Ovary (tissue), 10 donors: ENCODE measurements at regions of chr11 and their contacts with region 1.

Region 1: DNA sequence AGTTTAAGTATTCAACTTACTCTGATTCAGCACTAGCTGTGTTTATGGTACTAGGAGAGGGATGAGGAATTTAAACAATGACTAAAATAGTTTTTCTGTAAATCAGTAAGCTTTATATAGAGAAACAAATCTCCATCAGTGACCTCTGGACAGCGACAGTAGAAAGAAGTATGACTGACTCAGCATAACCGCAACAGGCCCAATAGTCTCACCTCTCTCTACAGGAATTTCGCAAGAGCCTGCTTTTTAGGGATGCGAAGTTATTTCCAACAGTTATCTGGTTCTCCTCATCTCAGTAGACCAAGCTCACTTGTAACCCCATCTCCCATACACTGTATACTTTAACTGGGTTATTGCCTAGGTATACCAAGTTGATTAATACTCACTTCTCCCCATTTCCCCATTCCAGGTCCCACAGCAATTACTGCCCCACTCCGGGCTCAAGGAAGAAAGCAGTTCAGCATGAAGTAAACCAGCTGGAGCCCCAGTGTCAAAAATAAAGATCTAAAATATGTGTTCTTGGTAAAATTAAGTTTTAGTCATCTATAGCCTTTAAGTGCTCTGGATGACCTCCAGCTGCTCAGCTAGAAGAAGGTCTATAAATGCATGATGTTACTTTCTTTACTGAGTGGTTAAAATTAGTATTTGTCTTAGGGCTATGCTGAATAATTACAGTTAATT is 770.7 kb upstream of the CCDC90B start:
- DNase-seq: no peak
- H3K4me3 ChIP-seq: no peak overlapping the region
- H3K27ac ChIP-seq: no peak overlapping the region
- H3K4me1 ChIP-seq: no peaks in the 10 kb centered on the region
- H3K27me3 ChIP-seq: no peaks in the 10 kb centered on the region
- CTCF ChIP-seq: no peak
- EP300 ChIP-seq: no peak
- POLR2A ChIP-seq: no peak

Region 2: DNA sequence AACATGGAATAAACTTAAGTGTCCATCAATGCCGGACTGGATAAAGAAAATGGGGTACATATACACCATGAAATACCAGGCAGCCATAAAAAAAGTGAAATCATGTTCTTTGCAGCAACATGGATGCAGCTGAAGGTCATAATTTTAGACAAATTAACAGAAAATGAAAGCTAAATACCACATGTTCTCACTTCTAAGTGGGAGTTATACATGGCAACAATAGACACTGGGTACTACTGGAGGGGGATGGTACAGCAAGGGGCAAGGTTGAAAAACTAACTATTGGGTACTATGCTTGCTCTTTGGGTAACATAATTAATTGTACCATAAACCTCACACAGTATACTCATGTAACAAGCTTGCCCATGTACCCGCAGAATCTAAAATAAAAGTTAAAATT is 718.7 kb after region 1 on chr11:
- intact Hi-C with region 1: loop called in 1 of 4 experiments (anchors 10 kb)
- DNase-seq: no peak
- H3K4me3 ChIP-seq: no peak overlapping the region
- H3K27ac ChIP-seq: no peak overlapping the region
- H3K4me1 ChIP-seq: no peaks in the 10 kb centered on the region
- H3K27me3 ChIP-seq: no peaks in the 10 kb centered on the region
- CTCF ChIP-seq: no peak
- EP300 ChIP-seq: no peak
- POLR2A ChIP-seq: no peak